ENCODE measurements at regions of chr10 and their contacts with region 1.

Region 1: GRCh38 chr10:38094158-38094920 is at the start of gene ZNF37A:
- DNase-seq: peak; percentile 80 to 82
- H3K4me3 ChIP-seq: peak within 1 kb of the TSS; percentile 80
- H3K27ac ChIP-seq: no peak within 1 kb of the TSS
- H3K4me1 ChIP-seq: peaks cover 4% of the 10 kb centered on the region; the same call in 1 of the 2 replicates
- H3K27me3 ChIP-seq: no peaks in the 10 kb centered on the region
- CTCF ChIP-seq: no peak
- total RNA-seq, gene ZNF37A: 4.8 and 5.8 TPM in 2 replicates

Region 2: DNA sequence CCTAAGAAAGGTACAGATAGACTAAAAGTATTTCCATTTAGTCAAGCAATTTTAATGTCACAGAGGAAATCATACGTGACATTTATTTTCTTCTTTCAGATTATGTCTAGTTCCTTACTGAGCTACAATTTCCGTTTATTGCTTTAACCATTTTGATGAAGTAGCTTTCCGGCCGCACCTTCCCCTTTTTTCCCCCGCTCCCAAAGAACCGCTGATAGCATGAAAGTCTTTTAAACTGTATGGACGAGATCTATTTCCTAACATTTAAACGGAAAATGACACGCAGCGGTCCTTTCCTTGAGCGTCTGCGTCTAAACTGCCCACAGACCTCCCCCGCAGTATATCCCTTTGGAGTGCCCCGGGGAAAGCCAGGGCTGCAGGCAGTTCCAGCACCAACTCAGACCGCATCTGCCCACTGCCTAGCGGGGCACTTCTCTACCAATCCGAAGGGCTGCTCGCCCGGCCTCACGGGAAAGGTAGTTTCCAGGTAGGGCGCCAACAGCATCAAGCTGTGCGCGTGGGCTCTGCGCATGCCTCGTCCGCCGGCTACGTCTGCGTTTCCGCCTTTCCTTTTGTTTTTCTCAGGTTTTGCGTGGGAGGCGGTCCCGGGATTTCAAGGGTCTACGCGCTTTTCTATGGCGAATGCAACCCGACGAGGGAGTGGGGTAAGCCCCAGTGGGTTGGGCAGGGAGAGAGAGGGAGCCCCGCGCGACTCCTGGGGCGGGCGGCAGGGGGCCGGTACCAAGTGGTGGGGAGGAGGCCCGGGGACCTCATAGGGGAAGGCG is 84.0 kb before region 1 on chr10 and contains the start of gene ZNF33A:
- CTCF ChIA-PET with region 1: no interaction called
- POLR2A ChIA-PET with region 1: no interaction called
- intact Hi-C with region 1: loop called (anchors 1 kb)
- DNase-seq: peak; percentile 75 to 87
- H3K4me3 ChIP-seq: peak within 1 kb of the TSS; percentile 86
- H3K27ac ChIP-seq: peak within 1 kb of the TSS; percentile 93
- H3K4me1 ChIP-seq: peaks cover 5% of the 10 kb centered on the region
- H3K27me3 ChIP-seq: no peaks in the 10 kb centered on the region
- CTCF ChIP-seq: no peak
- total RNA-seq, gene ZNF33A: 19.5 and 27.5 TPM in 2 replicates

Region 3: DNA sequence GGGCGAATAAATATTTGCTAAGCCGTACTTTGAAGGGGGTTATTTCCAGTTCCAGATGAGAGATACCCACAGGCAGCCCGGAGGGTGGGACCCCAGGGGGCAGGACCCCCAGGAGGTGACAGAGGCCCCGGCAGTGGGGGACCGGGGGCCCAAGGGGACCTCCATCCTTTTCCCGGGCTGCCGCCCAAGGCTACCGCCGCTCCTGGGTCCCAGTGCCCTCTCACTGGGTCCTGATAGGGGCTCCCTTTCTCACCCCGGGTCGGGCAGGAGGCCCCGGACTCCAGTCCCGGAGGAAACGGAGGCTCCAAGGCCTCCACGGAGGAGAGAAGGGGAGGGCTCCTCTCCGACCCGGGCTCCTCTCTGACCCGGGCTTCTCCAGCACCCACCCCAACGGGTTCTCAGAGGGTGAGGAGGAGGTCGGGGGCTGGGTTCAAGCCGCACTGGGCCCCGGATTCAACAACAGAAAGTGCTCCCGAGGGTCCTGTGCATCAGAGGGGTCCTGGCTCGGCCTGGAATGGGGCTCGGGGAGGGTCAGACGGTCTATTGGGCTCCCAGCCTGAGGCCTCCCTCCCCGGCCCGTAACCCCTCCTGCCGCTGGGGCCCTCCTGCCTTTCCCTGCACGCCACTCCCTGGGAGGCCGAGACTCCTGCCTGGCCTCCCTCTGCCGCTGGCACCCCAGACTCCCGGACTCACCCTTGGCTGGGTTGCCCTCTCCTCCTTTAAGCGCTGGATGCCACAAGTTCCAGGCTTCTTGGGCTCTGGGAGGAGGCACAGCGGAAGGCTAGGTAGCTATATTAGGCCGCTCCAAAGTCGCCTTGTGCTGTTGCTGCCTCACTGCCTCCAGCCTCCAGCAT is 62.3 kb after region 1 on chr10:
- CTCF ChIA-PET with region 1: no interaction called
- POLR2A ChIA-PET with region 1: no interaction called
- intact Hi-C with region 1: no loop called
- DNase-seq: no peak
- H3K4me3 ChIP-seq: no peak overlapping the region
- H3K27ac ChIP-seq: no peak overlapping the region
- H3K4me1 ChIP-seq: no peaks in the 10 kb centered on the region
- H3K27me3 ChIP-seq: peaks cover 8% of the 10 kb centered on the region
- CTCF ChIP-seq: no peak

Measured in PC-9 (cell line).